SK-N-SH (cell line): ENCODE measurements at regions of chr4 and their contacts with region 1.

Region 1: GRCh38 chr4:125283707-125284279 is 31.0 kb upstream of the FAT4 start:
- DNase-seq: peak; percentile 37
- H3K4me3 ChIP-seq: no peak overlapping the region
- H3K27ac ChIP-seq: no peak overlapping the region
- H3K4me1 ChIP-seq: no peaks in the 10 kb centered on the region
- H3K27me3 ChIP-seq: no peaks in the 10 kb centered on the region
- CTCF ChIP-seq: peak; percentile 75
- EP300 ChIP-seq: no peak
- RAD21 ChIP-seq: peak; percentile 83

Region 2: DNA sequence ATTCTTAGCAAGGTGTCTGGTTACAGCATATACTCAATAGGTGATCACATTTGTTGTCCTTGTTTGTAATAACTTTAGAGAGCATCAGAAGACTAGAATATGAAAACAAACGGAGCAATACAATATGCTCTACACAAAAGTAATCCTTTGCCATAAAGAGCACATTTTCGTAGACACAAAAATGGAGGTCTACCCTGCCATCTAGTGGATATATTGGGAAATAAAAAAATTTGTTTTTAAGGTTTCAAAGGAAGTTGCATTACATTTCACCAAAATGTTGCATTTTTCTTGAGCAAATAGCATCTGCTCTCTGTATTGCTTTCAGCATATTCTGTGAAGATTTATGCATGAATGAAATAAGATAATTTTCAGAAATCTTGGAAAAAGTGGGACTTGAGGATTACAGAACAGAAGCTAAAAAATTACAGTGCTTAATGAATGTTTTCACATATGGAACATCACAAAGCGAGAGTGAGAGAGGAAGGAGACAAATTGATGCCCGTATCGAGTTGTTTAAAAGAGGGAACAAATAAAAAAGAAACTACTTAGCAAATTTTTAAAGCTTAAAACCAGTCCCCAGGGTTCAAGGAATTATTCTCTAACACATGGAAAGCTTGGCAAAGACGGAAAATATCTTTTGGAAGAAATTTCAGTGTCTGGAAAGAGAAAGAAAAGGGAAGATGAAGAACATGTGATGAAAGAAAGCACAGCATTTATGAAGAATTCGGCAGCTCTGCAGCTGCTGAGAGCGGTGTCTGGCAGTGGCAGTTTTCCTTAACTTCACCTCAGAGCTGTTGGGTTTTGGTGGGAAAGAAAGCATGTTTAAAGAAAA is 961.3 kb before region 1 on chr4:
- CTCF ChIA-PET with region 1: interaction called, 10 read pairs
- POLR2A ChIA-PET with region 1: no interaction called
- DNase-seq: peak; percentile 25
- H3K4me3 ChIP-seq: no peak overlapping the region
- H3K27ac ChIP-seq: no peak overlapping the region; a peak in 1 of 4 replicates
- H3K4me1 ChIP-seq: peaks cover 0 to 4% of the 10 kb centered on the region in 2 experiments; a peak in 2 of 4 replicates
- H3K27me3 ChIP-seq: no peaks in the 10 kb centered on the region
- CTCF ChIP-seq: peak; percentile 70
- EP300 ChIP-seq: no peak
- RAD21 ChIP-seq: peak; percentile 81

Region 3: GRCh38 chr4:124712372-124713184 is 571.2 kb before region 1 on chr4 and contains the start of gene ANKRD50:
- CTCF ChIA-PET with region 1: interaction called, 10 read pairs
- POLR2A ChIA-PET with region 1: no interaction called
- DNase-seq: peak; percentile 93
- H3K4me3 ChIP-seq: peak within 1 kb of the TSS; percentile 86 to 88
- H3K27ac ChIP-seq: peak within 1 kb of the TSS; percentile 98 to 100
- H3K4me1 ChIP-seq: peaks cover 15 to 17% of the 10 kb centered on the region in 2 experiments; a peak in 3 of 4 replicates
- H3K27me3 ChIP-seq: no peaks in the 10 kb centered on the region
- CTCF ChIP-seq: no peak
- EP300 ChIP-seq: 0 out of 4 replicates have a peak, but pooled peaks have one; percentile 6 to 41
- RAD21 ChIP-seq: no peak; the same call in 1 of the 2 replicates
- polyA plus RNA-seq, gene ANKRD50: 13.5 and 18.3 TPM in 2 replicates

Region 4: DNA sequence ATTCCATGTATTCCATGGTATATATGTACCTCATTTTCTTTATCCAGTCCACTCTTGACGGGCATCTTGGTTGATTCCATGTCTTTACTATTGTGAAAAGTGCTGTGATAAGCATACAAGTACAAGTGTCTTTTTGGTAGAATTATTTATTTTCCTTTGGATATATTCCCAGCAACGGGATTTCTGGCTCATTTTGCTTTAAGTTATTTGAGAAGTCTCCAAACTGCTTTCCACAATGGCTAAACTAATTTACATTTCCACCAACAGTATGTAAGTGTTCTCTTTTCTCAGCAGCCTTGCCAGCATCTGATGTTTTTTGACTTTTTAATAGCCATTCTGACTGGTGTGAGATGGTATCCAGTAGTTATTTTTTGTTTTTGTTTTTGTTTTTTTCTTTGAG is 13.3 kb after region 1 on chr4:
- CTCF ChIA-PET with region 1: interaction called, 10 read pairs
- POLR2A ChIA-PET with region 1: no interaction called
- DNase-seq: no peak
- H3K4me3 ChIP-seq: no peak overlapping the region
- H3K27ac ChIP-seq: no peak overlapping the region
- H3K4me1 ChIP-seq: no peaks in the 10 kb centered on the region
- H3K27me3 ChIP-seq: no peaks in the 10 kb centered on the region
- CTCF ChIP-seq: no peak
- EP300 ChIP-seq: no peak
- RAD21 ChIP-seq: no peak